Heart left ventricle (tissue), 16 donors: ENCODE measurements at regions of chr5 and their contacts with region 1.

Region 1: DNA sequence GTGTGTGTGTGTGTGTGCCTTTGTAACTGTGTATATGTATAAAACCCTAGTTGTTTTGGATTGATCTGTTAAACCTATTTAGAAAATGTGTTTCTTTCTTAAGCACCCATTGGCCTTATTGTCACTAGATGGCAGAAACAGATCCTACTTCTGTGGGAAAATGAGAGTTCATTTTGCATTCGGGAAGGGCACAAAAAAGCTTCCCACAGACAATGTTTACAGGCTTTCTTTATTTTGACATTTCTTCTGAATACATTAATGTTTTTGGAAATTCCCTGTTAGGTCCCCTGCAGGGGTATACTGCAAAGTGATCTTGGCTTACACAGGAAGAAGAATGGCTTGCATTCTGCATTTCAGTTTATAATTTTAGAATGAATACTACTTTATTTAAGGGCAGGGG is 481.8 kb upstream of the ARRDC3 start:
- DNase-seq: no peak
- ATAC-seq: no peak
- H3K4me3 ChIP-seq: no peak overlapping the region
- H3K27ac ChIP-seq: no peak overlapping the region
- H3K4me1 ChIP-seq: no peaks in the 10 kb centered on the region
- H3K27me3 ChIP-seq: no peaks in the 10 kb centered on the region
- CTCF ChIP-seq: no peak
- POLR2A ChIP-seq: no peak

Region 2: GRCh38 chr5:91499943-91500531 is 364.9 kb before region 1 on chr5:
- intact Hi-C with region 1: loop called in 1 of 10 experiments (anchors 5 kb)
- DNase-seq: no peak
- ATAC-seq: no peak
- H3K4me3 ChIP-seq: no peak overlapping the region
- H3K27ac ChIP-seq: no peak overlapping the region
- H3K4me1 ChIP-seq: no peaks in the 10 kb centered on the region
- H3K27me3 ChIP-seq: no peaks in the 10 kb centered on the region
- CTCF ChIP-seq: peak; percentile 48 to 79 (median 64)
- POLR2A ChIP-seq: no peak